ENCODE measurements at regions of chr5 and their contacts with region 1.

Region 1: DNA sequence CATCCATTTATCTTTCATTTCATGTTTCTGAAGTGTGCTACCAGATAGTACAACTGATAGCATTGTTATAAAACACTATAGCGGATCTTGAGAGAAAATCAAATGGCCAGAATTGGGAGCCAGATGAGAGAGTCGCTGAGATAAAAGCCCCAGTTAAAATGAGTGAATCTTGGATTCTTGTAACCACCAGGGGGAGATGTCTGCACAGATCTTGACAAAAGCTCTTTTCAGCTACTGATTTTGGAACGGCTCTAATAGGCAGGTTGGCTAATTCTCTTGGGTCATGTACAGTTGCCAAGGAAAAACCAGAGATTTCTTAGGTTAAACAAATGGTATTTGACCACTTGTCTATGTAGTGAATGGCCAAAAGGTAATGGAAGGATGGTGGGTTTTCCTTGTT is 21.7 kb downstream of the F2RL2 start:
- DNase-seq: no peak
- H3K4me3 ChIP-seq: no peak overlapping the region
- CTCF ChIP-seq: peak; percentile 51

Region 2: GRCh38 chr5:76256116-76256889 is 345.2 kb before region 1 on chr5:
- CTCF ChIA-PET with region 1: no interaction called
- POLR2A ChIA-PET with region 1: no interaction called
- DNase-seq: peak; percentile 12
- H3K4me3 ChIP-seq: no peak overlapping the region
- CTCF ChIP-seq: peak; percentile 47

Region 3: GRCh38 chr5:76325876-76326491 is 275.5 kb before region 1 on chr5:
- CTCF ChIA-PET with region 1: no interaction called
- POLR2A ChIA-PET with region 1: no interaction called
- DNase-seq: no peak
- H3K4me3 ChIP-seq: no peak overlapping the region
- CTCF ChIP-seq: no peak

Region 4: DNA sequence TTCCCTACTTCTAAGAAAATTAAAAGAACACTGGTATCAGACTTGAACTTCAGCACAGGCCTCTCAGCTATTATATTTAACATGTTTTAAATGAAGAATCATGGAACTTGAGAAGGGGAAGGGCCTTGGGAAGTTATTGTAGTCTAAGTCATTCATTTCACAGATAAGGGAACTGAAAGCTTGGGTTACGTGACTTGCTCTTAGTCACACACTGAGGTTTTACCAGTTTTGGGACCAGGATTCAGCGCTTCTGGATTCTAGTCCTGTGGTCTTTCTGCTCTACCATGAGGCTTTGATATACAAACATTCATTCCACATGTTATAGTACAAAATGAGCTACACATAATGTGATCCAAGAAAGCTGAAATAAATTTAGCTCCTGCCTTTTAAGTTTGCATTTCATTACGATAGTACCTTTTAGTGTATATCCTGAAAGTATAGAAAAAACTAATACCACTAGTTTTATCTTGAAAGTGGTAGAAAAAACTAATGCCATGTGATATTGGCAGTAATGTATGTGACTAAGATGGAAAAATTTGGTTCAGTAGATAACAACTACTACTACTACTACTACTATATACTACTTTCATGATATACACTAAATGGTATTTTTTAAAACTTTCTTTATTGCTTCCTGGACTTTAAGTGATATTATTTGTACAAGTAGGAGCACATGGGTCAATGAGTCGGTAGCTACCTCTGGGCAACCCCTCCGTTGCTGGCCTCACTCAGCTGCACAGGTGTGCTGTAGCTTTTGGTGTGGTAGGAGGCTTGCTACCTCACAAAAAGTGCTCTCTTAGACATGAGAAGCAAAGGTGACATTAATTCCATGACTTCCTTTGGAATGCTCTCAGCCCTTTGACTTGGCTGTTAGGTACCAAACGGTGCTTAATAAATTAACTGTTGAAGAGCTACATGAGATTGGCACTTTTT is 19.0 kb before region 1 on chr5:
- CTCF ChIA-PET with region 1: interaction called, 22 read pairs
- POLR2A ChIA-PET with region 1: no interaction called
- DNase-seq: no peak
- H3K4me3 ChIP-seq: no peak overlapping the region
- CTCF ChIP-seq: no peak

Region 5: DNA sequence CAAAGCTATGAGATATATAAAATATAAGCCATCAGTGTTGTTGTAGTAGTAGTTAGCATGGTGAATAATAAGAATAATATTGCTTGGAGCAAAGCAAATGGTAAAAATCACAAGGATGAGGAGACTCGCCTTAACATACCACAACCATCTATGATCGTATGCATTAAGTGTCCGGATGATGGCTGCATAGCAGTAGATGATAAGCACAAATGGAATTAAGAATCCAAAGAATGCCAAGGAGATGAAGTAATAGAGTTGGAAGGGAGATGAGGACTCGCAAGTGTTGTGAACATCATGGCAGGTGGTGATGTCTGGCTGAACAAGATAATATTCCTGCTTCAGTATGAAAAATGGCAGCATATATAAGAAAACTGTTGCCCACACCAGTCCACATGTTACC is 16.2 kb after region 1 on chr5:
- CTCF ChIA-PET with region 1: interaction called, 47 read pairs
- POLR2A ChIA-PET with region 1: no interaction called
- DNase-seq: peak; percentile 92
- H3K4me3 ChIP-seq: no peak overlapping the region
- CTCF ChIP-seq: no peak

Region 6: DNA sequence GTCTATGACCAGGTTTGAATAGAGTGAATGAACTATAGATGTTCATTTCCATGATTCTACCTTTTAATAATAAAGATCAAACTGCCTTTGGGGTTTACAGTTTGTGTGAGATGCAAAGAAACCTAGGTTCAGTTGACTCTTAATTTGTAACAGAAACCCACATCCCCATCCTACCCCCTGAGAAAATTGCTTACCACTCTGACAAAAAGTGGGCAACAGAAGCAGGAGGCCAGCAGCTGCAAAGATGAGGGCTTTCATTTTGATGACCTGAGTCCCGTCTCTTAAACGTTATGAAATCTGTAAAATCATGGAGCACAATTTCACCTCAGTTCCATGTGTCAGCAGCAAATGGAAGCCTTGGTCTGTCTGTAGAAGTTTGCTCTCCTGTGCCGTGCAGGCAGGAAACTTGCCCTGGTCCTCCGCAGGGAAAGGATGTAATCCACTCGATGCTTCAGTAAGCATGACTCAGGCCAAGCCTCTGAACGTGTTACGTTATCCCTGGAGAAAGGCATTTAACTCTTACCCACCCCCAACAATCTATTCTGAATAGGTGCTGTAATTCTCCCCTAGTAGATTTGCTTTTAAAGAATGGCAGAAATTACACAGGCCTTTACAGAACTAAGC is 21.6 kb after region 1 on chr5 and contains the start of gene F2RL2:
- CTCF ChIA-PET with region 1: interaction called, 47 read pairs
- POLR2A ChIA-PET with region 1: no interaction called
- DNase-seq: no peak
- H3K4me3 ChIP-seq: peak within 1 kb of the TSS; percentile 60
- CTCF ChIP-seq: no peak

Region 7: GRCh38 chr5:76641514-76642120 is 40.1 kb after region 1 on chr5:
- CTCF ChIA-PET with region 1: interaction called, 288 read pairs
- POLR2A ChIA-PET with region 1: no interaction called
- DNase-seq: no peak
- H3K4me3 ChIP-seq: no peak overlapping the region
- CTCF ChIP-seq: peak; percentile 60

Region 8: GRCh38 chr5:76657683-76658311 is 56.3 kb after region 1 on chr5:
- CTCF ChIA-PET with region 1: interaction called, 39 read pairs
- POLR2A ChIA-PET with region 1: no interaction called
- DNase-seq: no peak
- H3K4me3 ChIP-seq: no peak overlapping the region
- CTCF ChIP-seq: no peak

Region 9: GRCh38 chr5:76691467-76692138 is 90.1 kb after region 1 on chr5:
- CTCF ChIA-PET with region 1: interaction called, 10 read pairs
- POLR2A ChIA-PET with region 1: no interaction called
- DNase-seq: no peak
- H3K4me3 ChIP-seq: no peak overlapping the region
- CTCF ChIP-seq: no peak

Measured in AG04449 (cell line).